IMR-90 (cell line): ENCODE measurements at regions of chr12 and their contacts with region 1.

Region 1: DNA sequence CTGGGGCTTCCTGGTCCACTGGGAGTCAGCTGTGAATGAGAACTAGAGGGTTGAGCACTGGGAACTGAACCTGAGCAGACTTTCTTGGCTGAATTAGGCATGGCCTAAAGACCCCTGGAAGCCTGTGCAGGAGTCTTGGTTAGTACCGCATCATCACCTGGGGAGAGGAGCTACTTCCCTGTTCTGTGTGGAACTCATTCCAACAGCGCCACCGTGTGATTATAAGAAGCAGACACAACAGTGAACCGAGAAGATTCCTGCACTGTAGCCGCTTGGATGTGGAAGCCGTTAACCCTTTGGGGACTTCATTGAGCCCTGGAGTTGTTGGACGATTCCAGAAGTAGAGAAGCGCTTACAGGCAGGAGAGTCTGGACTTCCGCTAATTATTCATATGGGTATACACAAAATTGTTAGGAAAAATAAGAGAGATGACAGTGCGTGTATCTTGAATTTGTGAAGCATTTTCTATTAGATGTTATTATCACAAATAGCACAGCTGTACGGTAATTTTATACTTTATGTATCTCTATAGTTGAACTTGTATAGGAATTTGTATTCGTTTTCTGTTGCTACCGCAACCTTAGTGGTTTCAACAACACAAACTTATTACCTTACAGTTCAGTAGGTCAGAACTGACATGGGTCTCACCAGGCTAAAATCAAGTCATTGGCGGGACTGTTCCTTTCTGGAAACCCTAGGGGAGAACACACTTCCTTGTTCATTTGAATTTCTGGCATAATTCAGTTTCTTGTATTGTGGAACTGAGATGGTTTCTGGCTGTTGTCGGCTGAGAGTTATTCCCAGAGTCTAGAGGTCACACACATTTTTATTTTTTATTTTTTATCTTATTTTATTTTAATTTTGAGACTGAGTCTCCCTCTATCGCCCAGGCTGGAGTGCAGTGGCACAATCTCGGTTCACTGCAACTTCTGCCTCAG is 100.7 kb downstream of the C2CD5 start:
- DNase-seq: peak; percentile 79
- ATAC-seq: peak; percentile 99
- H3K4me3 ChIP-seq: no peak overlapping the region
- H3K27ac ChIP-seq: no peak overlapping the region
- H3K4me1 ChIP-seq: peaks cover 3% of the 10 kb centered on the region; the same call in 1 of the 2 replicates
- H3K27me3 ChIP-seq: no peaks in the 10 kb centered on the region; the same call in 1 of the 2 replicates
- CTCF ChIP-seq: peak; percentile 81
- POLR2A ChIP-seq: no peak
- RAD21 ChIP-seq: peak; percentile 88

Region 2: DNA sequence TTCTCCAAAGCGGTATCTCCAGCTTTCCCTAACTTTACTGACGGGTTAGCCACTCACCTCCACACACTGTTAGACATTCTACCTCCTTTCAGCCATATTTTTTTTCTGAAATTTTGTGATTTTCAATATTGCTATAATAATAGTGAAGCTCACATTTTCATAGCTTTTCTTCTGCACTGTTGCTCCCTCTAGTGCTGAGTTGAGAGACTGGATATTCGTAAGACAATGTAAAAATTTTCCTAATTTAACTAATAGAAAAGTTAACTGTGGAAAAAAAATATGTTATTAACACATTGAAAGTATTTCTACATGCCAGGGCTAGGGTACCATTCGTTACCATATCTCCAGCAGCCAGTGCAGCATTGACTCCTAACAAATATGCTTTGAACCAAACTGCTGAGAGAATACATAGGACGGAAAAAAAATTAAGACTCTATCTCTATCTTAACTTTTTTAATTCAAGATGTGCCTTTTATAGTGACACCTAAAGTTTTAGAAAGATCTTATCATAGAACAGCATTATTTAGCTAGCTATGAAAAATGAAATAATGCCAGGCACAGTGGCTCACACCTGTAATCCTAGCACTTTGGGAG is 453.7 kb before region 1 on chr12:
- CTCF ChIA-PET with region 1: no interaction called
- POLR2A ChIA-PET with region 1: no interaction called
- dilution Hi-C with region 1: no loop called
- in situ Hi-C with region 1: no loop called
- intact Hi-C with region 1: loop called (anchors 10 kb)
- DNase-seq: peak; percentile 66
- ATAC-seq: peak; percentile 73
- H3K4me3 ChIP-seq: no peak overlapping the region
- H3K27ac ChIP-seq: no peak overlapping the region
- H3K4me1 ChIP-seq: no peaks in the 10 kb centered on the region
- H3K27me3 ChIP-seq: no peaks in the 10 kb centered on the region
- CTCF ChIP-seq: peak; percentile 81
- POLR2A ChIP-seq: no peak
- RAD21 ChIP-seq: peak; percentile 83

Region 3: GRCh38 chr12:22083167-22083566 is 360.5 kb before region 1 on chr12:
- CTCF ChIA-PET with region 1: interaction called, 3 read pairs
- POLR2A ChIA-PET with region 1: no interaction called
- dilution Hi-C with region 1: no loop called
- in situ Hi-C with region 1: loop called (anchors 10 kb)
- intact Hi-C with region 1: loop called (anchors 1 kb)
- DNase-seq: peak; percentile 35
- ATAC-seq: peak; percentile 70
- H3K4me3 ChIP-seq: no peak overlapping the region
- H3K27ac ChIP-seq: no peak overlapping the region
- H3K4me1 ChIP-seq: no peaks in the 10 kb centered on the region
- H3K27me3 ChIP-seq: no peaks in the 10 kb centered on the region; the same call in 1 of the 2 replicates
- CTCF ChIP-seq: peak; percentile 64
- POLR2A ChIP-seq: no peak
- RAD21 ChIP-seq: peak; percentile 74

Region 4: GRCh38 chr12:22100958-22101748 is 342.5 kb before region 1 on chr12:
- CTCF ChIA-PET with region 1: no interaction called
- POLR2A ChIA-PET with region 1: no interaction called
- dilution Hi-C with region 1: no loop called
- in situ Hi-C with region 1: no loop called
- intact Hi-C with region 1: loop called (anchors 1 kb)
- DNase-seq: peak; percentile 73
- ATAC-seq: peak; percentile 58
- H3K4me3 ChIP-seq: no peak overlapping the region
- H3K27ac ChIP-seq: no peak overlapping the region
- H3K4me1 ChIP-seq: peaks cover 8% of the 10 kb centered on the region
- H3K27me3 ChIP-seq: no peaks in the 10 kb centered on the region; the same call in 1 of the 2 replicates
- CTCF ChIP-seq: peak; percentile 65
- POLR2A ChIP-seq: no peak
- RAD21 ChIP-seq: peak; percentile 68

Region 5: DNA sequence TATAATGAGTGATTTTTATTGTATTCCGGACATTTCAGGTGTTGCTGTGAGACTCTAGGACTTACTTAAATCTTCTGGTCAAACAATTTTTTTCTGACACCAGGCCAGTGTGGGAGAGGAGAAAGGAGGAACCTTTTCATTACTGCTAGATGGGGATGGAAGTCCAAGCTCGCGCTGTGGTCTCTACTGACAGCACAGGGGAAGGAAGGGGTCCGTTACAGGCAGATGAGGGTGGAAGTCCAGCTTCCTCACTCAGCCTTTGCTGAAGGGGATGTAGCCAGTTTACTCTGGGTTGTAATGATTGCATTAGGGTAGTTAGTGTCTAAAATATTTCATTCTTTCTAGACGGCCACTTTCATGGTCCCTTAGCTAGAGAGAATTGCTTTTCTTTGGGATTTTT is 82.9 kb before region 1 on chr12:
- CTCF ChIA-PET with region 1: no interaction called
- POLR2A ChIA-PET with region 1: no interaction called
- dilution Hi-C with region 1: no loop called
- in situ Hi-C with region 1: no loop called
- intact Hi-C with region 1: no loop called
- DNase-seq: no peak
- ATAC-seq: no peak
- H3K4me3 ChIP-seq: no peak overlapping the region
- H3K27ac ChIP-seq: no peak overlapping the region
- H3K4me1 ChIP-seq: no peaks in the 10 kb centered on the region
- H3K27me3 ChIP-seq: no peaks in the 10 kb centered on the region
- CTCF ChIP-seq: no peak
- POLR2A ChIP-seq: no peak
- RAD21 ChIP-seq: no peak

Region 6: DNA sequence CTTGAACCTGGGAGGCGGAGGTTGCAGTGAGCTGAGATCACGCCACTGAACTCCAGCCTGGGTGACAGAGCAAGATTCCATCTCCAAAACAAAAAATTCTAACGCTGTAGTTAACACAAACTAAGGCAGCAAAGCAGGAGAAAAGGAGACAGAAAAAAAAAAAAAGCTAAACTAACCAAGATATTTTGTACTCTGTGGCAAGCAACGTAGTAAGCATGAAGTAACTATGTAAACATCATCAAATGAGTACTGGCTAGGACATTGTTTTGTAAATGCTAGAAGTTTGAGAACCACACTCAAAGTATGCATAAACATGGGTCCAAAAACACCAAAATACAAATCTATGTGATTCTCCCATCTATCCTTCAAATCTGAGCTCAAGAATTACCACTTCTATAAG is 56.5 kb after region 1 on chr12:
- CTCF ChIA-PET with region 1: no interaction called
- POLR2A ChIA-PET with region 1: no interaction called
- dilution Hi-C with region 1: no loop called
- in situ Hi-C with region 1: no loop called
- intact Hi-C with region 1: no loop called
- DNase-seq: no peak
- ATAC-seq: peak; percentile 53
- H3K4me3 ChIP-seq: no peak overlapping the region
- H3K27ac ChIP-seq: no peak overlapping the region
- H3K4me1 ChIP-seq: no peaks in the 10 kb centered on the region
- H3K27me3 ChIP-seq: no peaks in the 10 kb centered on the region
- CTCF ChIP-seq: no peak
- POLR2A ChIP-seq: no peak
- RAD21 ChIP-seq: no peak

Region 7: GRCh38 chr12:22759769-22760674 is 316.4 kb after region 1 on chr12:
- CTCF ChIA-PET with region 1: no interaction called
- POLR2A ChIA-PET with region 1: no interaction called
- dilution Hi-C with region 1: no loop called
- in situ Hi-C with region 1: no loop called
- intact Hi-C with region 1: no loop called
- DNase-seq: no peak
- ATAC-seq: no peak
- H3K4me3 ChIP-seq: no peak overlapping the region
- H3K27ac ChIP-seq: no peak overlapping the region
- H3K4me1 ChIP-seq: no peaks in the 10 kb centered on the region
- H3K27me3 ChIP-seq: no peaks in the 10 kb centered on the region
- CTCF ChIP-seq: no peak
- POLR2A ChIP-seq: no peak
- RAD21 ChIP-seq: no peak

Region 8: DNA sequence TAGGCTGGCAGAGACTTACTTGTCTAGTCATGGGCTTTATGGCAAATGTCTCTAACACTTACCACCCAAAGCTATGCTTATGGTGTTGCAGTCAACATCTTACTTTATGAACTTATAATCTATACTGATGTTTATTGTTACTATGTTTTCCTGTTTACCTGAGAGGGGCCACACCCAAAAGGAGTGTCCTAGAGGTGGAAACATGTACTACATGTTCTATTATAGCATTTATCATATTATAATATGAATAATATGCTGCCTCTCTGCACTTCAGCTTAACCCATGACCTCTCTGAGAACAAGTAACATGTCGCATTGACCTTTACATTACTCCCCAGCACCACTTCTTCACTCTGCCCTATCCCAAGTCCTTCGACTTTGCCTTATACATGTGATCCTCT is 683.1 kb after region 1 on chr12:
- CTCF ChIA-PET with region 1: no interaction called
- POLR2A ChIA-PET with region 1: no interaction called
- dilution Hi-C with region 1: no loop called
- in situ Hi-C with region 1: no loop called
- intact Hi-C with region 1: no loop called
- DNase-seq: no peak
- ATAC-seq: no peak
- H3K4me3 ChIP-seq: no peak overlapping the region
- H3K27ac ChIP-seq: no peak overlapping the region
- H3K4me1 ChIP-seq: no peaks in the 10 kb centered on the region
- H3K27me3 ChIP-seq: no peaks in the 10 kb centered on the region
- CTCF ChIP-seq: no peak
- POLR2A ChIP-seq: no peak
- RAD21 ChIP-seq: no peak